Esophagus muscularis mucosa (tissue), 4 donors: ENCODE measurements at regions of chr17 and their contacts with region 1.

Region 1: DNA sequence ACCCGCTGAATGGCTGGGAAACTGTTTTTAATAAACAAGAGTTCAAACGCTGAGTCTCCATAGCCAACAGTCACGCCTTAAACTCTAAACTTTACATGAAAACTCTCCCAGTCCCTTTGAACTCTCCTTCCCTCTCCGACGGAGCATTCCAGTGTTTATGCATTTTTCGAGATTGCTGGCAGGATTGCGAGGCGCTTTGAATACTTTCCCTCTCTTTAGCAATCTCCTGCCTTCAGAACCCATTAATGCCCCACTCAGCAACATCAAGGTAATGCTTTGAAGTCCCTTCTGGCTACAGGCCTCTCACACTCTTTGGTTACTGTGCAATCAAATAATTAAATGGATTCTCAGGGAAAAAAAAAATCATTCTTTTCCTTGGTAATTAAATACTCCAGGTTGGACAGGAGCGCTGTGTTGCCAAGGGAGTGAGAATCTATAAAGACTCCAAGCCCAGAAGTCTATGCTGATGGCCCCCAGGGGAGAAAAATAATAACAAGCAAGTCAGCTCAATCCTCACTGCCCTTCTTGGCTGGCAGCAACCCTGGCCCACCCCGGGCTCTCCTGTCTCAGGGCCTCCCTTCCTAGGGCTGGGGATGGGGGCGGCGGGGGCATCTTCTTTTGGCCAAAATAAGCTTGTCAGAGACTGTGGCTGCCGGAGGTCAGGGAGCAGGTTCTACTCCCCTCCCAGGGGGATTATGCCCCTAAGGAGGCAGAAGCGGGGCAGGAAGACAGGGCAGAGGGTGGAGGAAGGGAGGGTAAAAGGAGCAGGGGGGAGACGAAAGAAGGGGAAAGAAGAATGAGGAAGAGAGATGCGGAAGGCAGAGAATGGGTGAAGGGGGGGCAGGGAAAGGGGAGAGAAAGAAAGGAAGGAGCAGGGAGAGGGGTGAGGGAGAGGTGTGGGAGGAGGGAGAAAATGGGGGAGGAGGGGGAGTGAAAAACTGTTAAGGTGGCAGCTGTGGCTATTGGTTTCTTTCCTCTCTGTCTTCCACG is 45.2 kb downstream of the AXIN2 start:
- DNase-seq: no peak
- H3K4me3 ChIP-seq: no peak overlapping the region
- H3K27ac ChIP-seq: peak overlapping the region; percentile 79 to 91 (median 84)
- H3K4me1 ChIP-seq: peaks cover 5 to 39% (median 34%) of the 10 kb centered on the region in 4 donors
- H3K27me3 ChIP-seq: no peaks in the 10 kb centered on the region
- CTCF ChIP-seq: no peak
- EP300 ChIP-seq: peak; percentile 19
- POLR2A ChIP-seq: no peak

Region 2: GRCh38 chr17:65472415-65473309 is 43.6 kb before region 1 on chr17:
- intact Hi-C with region 1: loop called (anchors 5 kb)
- DNase-seq: no peak
- H3K4me3 ChIP-seq: no peak overlapping the region
- H3K27ac ChIP-seq: peak overlapping the region; percentile 79 to 84 (median 83)
- H3K4me1 ChIP-seq: peaks cover 13 to 32% (median 27%) of the 10 kb centered on the region in 4 donors
- H3K27me3 ChIP-seq: no peaks in the 10 kb centered on the region
- CTCF ChIP-seq: no peak
- EP300 ChIP-seq: peak; percentile 28
- POLR2A ChIP-seq: no peak